ENCODE measurements at regions of chr3 and their contacts with region 1.

Region 1: DNA sequence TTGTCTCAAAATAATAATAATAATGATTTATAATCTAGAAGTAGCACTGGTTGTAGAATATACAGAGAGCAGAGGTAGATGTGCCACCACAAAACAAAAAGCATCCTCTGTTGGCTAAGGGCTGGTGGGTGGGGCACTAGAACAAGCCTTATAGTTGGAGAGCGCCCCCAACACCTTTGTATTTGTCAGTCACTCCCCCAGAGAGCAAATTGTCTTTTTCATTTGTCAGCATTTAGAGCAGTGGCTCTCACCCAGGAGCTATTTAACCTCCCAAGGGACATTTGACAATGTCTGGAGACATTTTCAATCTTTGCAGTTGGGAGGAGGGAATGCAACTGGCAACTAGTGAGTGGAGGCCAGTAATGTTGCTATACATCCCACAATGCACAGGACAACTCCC is 6.3 kb downstream of the KAT2B start:
- DNase-seq: no peak
- H3K4me3 ChIP-seq: no peak overlapping the region
- H3K27ac ChIP-seq: no peak overlapping the region
- H3K4me1 ChIP-seq: no peaks in the 10 kb centered on the region
- H3K27me3 ChIP-seq: no peaks in the 10 kb centered on the region
- CTCF ChIP-seq: no peak
- POLR2A ChIP-seq: no peak

Region 2: GRCh38 chr3:20023623-20024405 is 22.7 kb before region 1 on chr3:
- intact Hi-C with region 1: loop called (anchors 1 kb)
- DNase-seq: peak in 1 of 2 donors; percentile 43
- H3K4me3 ChIP-seq: no peak overlapping the region
- H3K27ac ChIP-seq: peak overlapping the region; percentile 73 to 81
- H3K4me1 ChIP-seq: peaks cover 0 to 9% of the 10 kb centered on the region in 2 donors
- H3K27me3 ChIP-seq: no peaks in the 10 kb centered on the region
- CTCF ChIP-seq: no peak
- POLR2A ChIP-seq: no peak

Region 3: DNA sequence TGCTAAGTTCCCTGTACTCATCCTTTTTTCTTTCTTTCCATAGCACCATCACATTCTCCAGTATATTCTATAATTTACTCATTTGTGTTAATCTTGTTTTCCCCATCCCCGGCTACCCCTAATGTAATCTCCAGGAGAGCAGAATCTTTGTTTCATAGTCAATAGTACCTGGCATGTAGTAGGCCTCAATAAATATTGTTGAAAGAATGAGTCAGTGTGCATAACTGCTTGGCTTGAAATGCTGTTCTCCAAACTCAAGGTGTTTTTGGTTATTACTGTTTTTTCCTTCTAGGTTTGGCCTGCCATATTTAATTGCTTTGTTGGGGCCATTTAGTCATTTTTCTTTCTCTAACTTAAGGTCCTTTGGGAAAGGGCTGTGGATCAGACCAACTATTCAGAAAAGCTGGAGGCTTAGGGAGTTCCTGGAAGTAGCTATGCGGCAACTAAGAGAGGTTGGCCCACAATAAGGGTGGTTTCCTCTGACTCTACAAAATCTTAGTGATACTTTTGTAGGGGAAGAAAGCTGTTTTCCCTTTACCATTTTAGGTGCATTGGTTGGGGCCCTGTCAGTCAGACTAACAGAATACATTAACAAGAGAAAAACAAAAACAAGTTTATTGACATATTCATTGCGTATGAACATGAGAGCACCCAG is 22.1 kb after region 1 on chr3:
- intact Hi-C with region 1: loop called (anchors 1 kb)
- DNase-seq: no peak
- H3K4me3 ChIP-seq: no peak overlapping the region
- H3K27ac ChIP-seq: no peak overlapping the region
- H3K4me1 ChIP-seq: peaks cover 0 to 4% of the 10 kb centered on the region in 2 donors
- H3K27me3 ChIP-seq: no peaks in the 10 kb centered on the region
- CTCF ChIP-seq: no peak
- POLR2A ChIP-seq: no peak

Measured in breast epithelium (tissue), 4 donors.